Natural killer cell (primary cell): ENCODE measurements at regions of chr10 and their contacts with region 1.

Region 1: DNA sequence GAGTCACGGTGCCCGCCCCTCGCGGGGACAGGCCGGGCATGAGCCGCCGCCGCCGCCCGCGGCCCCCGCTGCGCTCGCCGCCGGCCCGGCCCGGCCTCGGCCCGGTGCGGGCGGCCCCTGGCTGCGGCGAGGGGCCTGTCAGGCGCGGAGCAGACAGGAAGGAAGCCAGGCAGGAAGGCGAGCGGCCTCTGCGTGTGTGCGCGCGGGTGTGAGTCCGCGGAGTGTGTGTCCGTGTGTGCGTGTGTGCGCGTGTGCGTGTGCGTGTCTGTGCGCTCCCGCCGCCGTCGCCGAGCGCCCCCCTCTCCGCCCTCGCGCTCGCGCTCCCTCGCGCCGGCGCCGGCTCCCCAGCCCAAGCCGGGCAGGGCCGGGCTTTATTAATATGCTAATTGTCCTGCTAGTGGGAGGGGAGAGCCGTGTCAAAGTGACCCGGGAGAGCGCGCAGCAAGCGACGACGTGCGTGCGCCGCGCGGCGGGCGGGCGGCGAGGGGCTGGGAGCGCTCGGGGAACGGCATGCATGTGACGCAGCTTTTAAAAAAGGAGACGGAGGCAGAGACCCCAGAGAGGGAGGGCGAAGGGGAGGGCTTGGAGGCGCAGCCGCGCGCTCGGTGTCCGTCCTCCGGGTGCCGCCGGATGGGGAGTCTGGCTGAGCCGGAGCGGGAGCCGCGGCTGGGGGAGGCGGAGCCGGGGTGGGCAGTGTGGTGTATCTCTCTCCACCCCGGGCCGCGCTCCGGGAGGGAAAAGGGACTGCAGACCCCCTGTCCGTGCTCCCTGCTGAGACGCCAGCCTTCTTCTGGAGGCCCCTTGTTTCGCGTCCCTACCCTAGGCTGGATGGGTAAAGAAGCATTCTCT is at the start of gene LDB1:
- DNase-seq: peak; percentile 66 to 88
- ATAC-seq: peak; percentile 61 to 84 (median 76)
- H3K4me3 ChIP-seq: peak within 1 kb of the TSS; percentile 84
- H3K4me3 Mint-ChIP-seq: peak within 1 kb of the TSS; percentile 87
- H3K27ac ChIP-seq: peak within 1 kb of the TSS; percentile 96
- H3K27ac Mint-ChIP-seq: peak within 1 kb of the TSS; percentile 77 to 95
- H3K4me1 ChIP-seq: peaks cover 57% of the 10 kb centered on the region
- H3K4me1 Mint-ChIP-seq: peaks cover 43 to 56% of the 10 kb centered on the region in 2 donors
- H3K27me3 ChIP-seq: no peaks in the 10 kb centered on the region
- H3K27me3 Mint-ChIP-seq: no peaks in the 10 kb centered on the region
- CTCF ChIP-seq: no peak
- total RNA-seq, gene LDB1: 103 to 109 (median 104) TPM

Region 2: GRCh38 chr10:102132563-102133372 is 12.4 kb after region 1 on chr10 and contains the start of gene PPRC1:
- intact Hi-C with region 1: loop called (anchors 1 kb)
- DNase-seq: peak; percentile 94 to 98
- ATAC-seq: peak; percentile 94 to 99 (median 96)
- H3K4me3 ChIP-seq: peak within 1 kb of the TSS; percentile 96
- H3K4me3 Mint-ChIP-seq: peak within 1 kb of the TSS; percentile 98
- H3K27ac ChIP-seq: peak within 1 kb of the TSS; percentile 86
- H3K27ac Mint-ChIP-seq: peak within 1 kb of the TSS; percentile 93 to 97
- H3K4me1 ChIP-seq: peaks cover 27% of the 10 kb centered on the region
- H3K4me1 Mint-ChIP-seq: peaks cover 33 to 37% of the 10 kb centered on the region in 2 donors
- H3K27me3 ChIP-seq: no peaks in the 10 kb centered on the region
- H3K27me3 Mint-ChIP-seq: no peaks in the 10 kb centered on the region
- CTCF ChIP-seq: peak; percentile 96
- total RNA-seq, gene PPRC1: 29.1 to 48.0 (median 37.7) TPM